ENCODE measurements at regions of chr9 and their contacts with region 1.

Region 1: GRCh38 chr9:30140407-30140806 is 2244.0 kb upstream of the ACO1 start:
- DNase-seq: no peak
- ATAC-seq: no peak
- H3K4me3 ChIP-seq: no peak overlapping the region
- H3K27ac ChIP-seq: no peak overlapping the region
- H3K4me1 ChIP-seq: no peaks in the 10 kb centered on the region
- H3K27me3 ChIP-seq: no peaks in the 10 kb centered on the region
- CTCF ChIP-seq: no peak
- POLR2A ChIP-seq: no peak
- RAD21 ChIP-seq: no peak

Region 2: DNA sequence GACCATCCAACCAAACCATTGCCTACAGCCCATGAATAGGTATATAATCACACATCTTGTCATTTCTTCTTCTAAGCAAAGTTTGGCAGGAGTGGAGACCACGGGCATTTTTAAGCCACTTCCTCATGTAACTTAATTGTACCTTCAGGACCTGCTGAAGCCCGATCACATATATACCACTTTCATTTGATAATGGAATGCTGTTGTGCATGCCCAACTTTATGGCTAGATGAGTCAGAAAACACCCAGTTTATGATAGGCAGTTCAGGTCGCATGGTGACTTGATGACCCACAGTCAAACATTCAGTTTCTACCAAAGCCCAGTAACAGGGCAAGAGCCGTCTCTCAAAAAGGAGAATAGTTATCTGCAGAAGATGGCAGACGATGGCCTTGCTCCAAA is 51.0 kb before region 1 on chr9:
- CTCF ChIA-PET with region 1: no interaction called
- POLR2A ChIA-PET with region 1: no interaction called
- RAD21 ChIA-PET with region 1: no interaction called
- intact Hi-C with region 1: loop called (anchors 5 kb)
- DNase-seq: no peak
- ATAC-seq: no peak
- H3K4me3 ChIP-seq: no peak overlapping the region
- H3K27ac ChIP-seq: no peak overlapping the region
- H3K4me1 ChIP-seq: no peaks in the 10 kb centered on the region
- H3K27me3 ChIP-seq: no peaks in the 10 kb centered on the region
- CTCF ChIP-seq: no peak
- POLR2A ChIP-seq: no peak
- RAD21 ChIP-seq: no peak

Measured in HCT116 (cell line).